ENCODE measurements at regions of chr11 and their contacts with region 1.

Region 1: GRCh38 chr11:70568038-70568813 is 169.9 kb downstream of the CTTN start:
- DNase-seq: peak; percentile 43 to 50
- ATAC-seq: peak; percentile 79 to 95 (median 88)
- H3K4me3 ChIP-seq: peak overlapping the region in 9 of 10 donors; percentile 14 to 57 (median 47)
- H3K27ac ChIP-seq: peak overlapping the region in 9 of 10 donors; percentile 59 to 89 (median 83)
- H3K4me1 ChIP-seq: peaks cover 0 to 22% (median 17%) of the 10 kb centered on the region in 9 donors
- H3K27me3 ChIP-seq: peaks cover 0 to 15% (median 6%) of the 10 kb centered on the region in 7 donors
- CTCF ChIP-seq: peak in 8 of 9 donors; percentile 5 to 62 (median 38)

Region 2: GRCh38 chr11:70755410-70756161 is 187.4 kb after region 1 on chr11:
- intact Hi-C with region 1: loop called in 1 of 10 experiments (anchors 10 kb)
- DNase-seq: peak; percentile 73 to 76
- ATAC-seq: peak; percentile 95 to 98 (median 96)
- H3K4me3 ChIP-seq: no peak overlapping the region
- H3K27ac ChIP-seq: no peak overlapping the region
- H3K4me1 ChIP-seq: peaks cover 0 to 8% (median 5%) of the 10 kb centered on the region in 9 donors
- H3K27me3 ChIP-seq: peaks cover 0 to 24% (median 12%) of the 10 kb centered on the region in 7 donors
- CTCF ChIP-seq: peak; percentile 92 to 99 (median 97)